IMR-90 (cell line): ENCODE measurements at regions of chr3 and their contacts with region 1.

Region 1: DNA sequence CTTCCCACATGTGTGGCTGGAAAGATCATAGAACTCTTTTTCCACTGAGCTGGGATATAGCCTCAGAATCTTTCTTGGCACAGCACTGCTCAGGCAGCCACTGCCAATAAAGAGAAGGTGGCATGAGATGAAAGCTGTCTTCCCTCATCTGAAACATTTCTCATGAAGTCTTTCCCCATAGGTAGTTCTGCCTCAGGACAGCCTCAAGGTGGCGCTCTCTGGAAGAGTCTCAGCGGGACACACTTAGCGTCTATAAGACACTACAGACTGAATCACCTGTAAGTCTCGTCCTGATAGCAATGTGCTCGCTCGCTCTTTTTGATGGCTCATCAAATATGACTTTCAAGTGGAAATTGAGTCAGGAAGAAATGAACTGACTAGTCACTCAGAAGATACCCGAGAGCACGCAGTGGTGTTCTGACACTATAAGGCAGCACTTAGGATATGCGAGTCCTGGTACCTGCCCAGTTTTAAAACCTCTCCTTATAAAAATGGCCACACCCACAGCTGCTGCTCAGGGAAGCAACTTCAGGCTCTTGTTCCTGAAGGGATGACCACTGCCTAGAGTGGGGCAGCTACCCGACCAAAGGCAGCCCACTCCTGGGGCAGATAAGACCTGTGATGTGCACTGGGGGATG is 269.5 kb downstream of the SUCLG2 start:
- DNase-seq: peak; percentile 50
- ATAC-seq: peak; percentile 54
- H3K4me3 ChIP-seq: no peak overlapping the region
- H3K27ac ChIP-seq: no peak overlapping the region
- H3K4me1 ChIP-seq: peaks cover 4% of the 10 kb centered on the region; the same call in 1 of the 2 replicates
- H3K27me3 ChIP-seq: no peaks in the 10 kb centered on the region
- CTCF ChIP-seq: peak; percentile 60
- POLR2A ChIP-seq: no peak
- RAD21 ChIP-seq: peak; percentile 68

Region 2: GRCh38 chr3:67263866-67264265 is 121.0 kb before region 1 on chr3:
- CTCF ChIA-PET with region 1: no interaction called
- POLR2A ChIA-PET with region 1: no interaction called
- dilution Hi-C with region 1: no loop called
- in situ Hi-C with region 1: no loop called
- intact Hi-C with region 1: no loop called
- DNase-seq: no peak
- ATAC-seq: no peak
- H3K4me3 ChIP-seq: no peak overlapping the region
- H3K27ac ChIP-seq: no peak overlapping the region
- H3K4me1 ChIP-seq: no peaks in the 10 kb centered on the region
- H3K27me3 ChIP-seq: no peaks in the 10 kb centered on the region
- CTCF ChIP-seq: no peak
- POLR2A ChIP-seq: no peak
- RAD21 ChIP-seq: no peak

Region 3: GRCh38 chr3:67605377-67605776 is 220.5 kb after region 1 on chr3:
- CTCF ChIA-PET with region 1: interaction called, 4 read pairs
- POLR2A ChIA-PET with region 1: no interaction called
- dilution Hi-C with region 1: no loop called
- in situ Hi-C with region 1: loop called (anchors 10 kb)
- intact Hi-C with region 1: loop called (anchors 1 kb)
- DNase-seq: peak; percentile 83
- ATAC-seq: peak; percentile 95
- H3K4me3 ChIP-seq: no peak overlapping the region
- H3K27ac ChIP-seq: no peak overlapping the region
- H3K4me1 ChIP-seq: no peaks in the 10 kb centered on the region; the same call in 1 of the 2 replicates
- H3K27me3 ChIP-seq: no peaks in the 10 kb centered on the region
- CTCF ChIP-seq: peak; percentile 57
- POLR2A ChIP-seq: no peak
- RAD21 ChIP-seq: peak; percentile 54

Region 4: GRCh38 chr3:67783281-67784250 is 398.7 kb after region 1 on chr3:
- CTCF ChIA-PET with region 1: no interaction called
- POLR2A ChIA-PET with region 1: no interaction called
- dilution Hi-C with region 1: no loop called
- in situ Hi-C with region 1: loop called (anchors 10 kb)
- intact Hi-C with region 1: no loop called
- DNase-seq: peak; percentile 59
- ATAC-seq: peak; percentile 81
- H3K4me3 ChIP-seq: no peak overlapping the region
- H3K27ac ChIP-seq: peak overlapping the region; percentile 95; the same call in 1 of the 2 replicates
- H3K4me1 ChIP-seq: peaks cover 4% of the 10 kb centered on the region; the same call in 1 of the 2 replicates
- H3K27me3 ChIP-seq: no peaks in the 10 kb centered on the region; the same call in 1 of the 2 replicates
- CTCF ChIP-seq: no peak
- POLR2A ChIP-seq: no peak
- RAD21 ChIP-seq: no peak

Region 5: GRCh38 chr3:67863869-67864268 is 479.0 kb after region 1 on chr3:
- CTCF ChIA-PET with region 1: no interaction called
- POLR2A ChIA-PET with region 1: no interaction called
- dilution Hi-C with region 1: no loop called
- in situ Hi-C with region 1: no loop called
- intact Hi-C with region 1: loop called (anchors 5 kb)
- DNase-seq: peak; percentile 16
- ATAC-seq: no peak
- H3K4me3 ChIP-seq: no peak overlapping the region
- H3K27ac ChIP-seq: no peak overlapping the region
- H3K4me1 ChIP-seq: no peaks in the 10 kb centered on the region
- H3K27me3 ChIP-seq: no peaks in the 10 kb centered on the region
- CTCF ChIP-seq: peak; percentile 34
- POLR2A ChIP-seq: no peak
- RAD21 ChIP-seq: peak; percentile 23; the same call in 1 of the 2 replicates

Region 6: GRCh38 chr3:68876112-68876713 is 1491.3 kb after region 1 on chr3:
- CTCF ChIA-PET with region 1: no interaction called
- POLR2A ChIA-PET with region 1: no interaction called
- dilution Hi-C with region 1: no loop called
- in situ Hi-C with region 1: no loop called
- intact Hi-C with region 1: loop called (anchors 5 kb)
- DNase-seq: peak; percentile 74
- ATAC-seq: peak; percentile 96
- H3K4me3 ChIP-seq: no peak overlapping the region
- H3K27ac ChIP-seq: no peak overlapping the region
- H3K4me1 ChIP-seq: no peaks in the 10 kb centered on the region
- H3K27me3 ChIP-seq: peaks cover 3% of the 10 kb centered on the region; the same call in 1 of the 2 replicates
- CTCF ChIP-seq: peak; percentile 92
- POLR2A ChIP-seq: no peak
- RAD21 ChIP-seq: peak; percentile 86